Esophagus squamous epithelium (tissue), 5 donors: ENCODE measurements at regions of chr1 and their contacts with region 1.

Region 1: DNA sequence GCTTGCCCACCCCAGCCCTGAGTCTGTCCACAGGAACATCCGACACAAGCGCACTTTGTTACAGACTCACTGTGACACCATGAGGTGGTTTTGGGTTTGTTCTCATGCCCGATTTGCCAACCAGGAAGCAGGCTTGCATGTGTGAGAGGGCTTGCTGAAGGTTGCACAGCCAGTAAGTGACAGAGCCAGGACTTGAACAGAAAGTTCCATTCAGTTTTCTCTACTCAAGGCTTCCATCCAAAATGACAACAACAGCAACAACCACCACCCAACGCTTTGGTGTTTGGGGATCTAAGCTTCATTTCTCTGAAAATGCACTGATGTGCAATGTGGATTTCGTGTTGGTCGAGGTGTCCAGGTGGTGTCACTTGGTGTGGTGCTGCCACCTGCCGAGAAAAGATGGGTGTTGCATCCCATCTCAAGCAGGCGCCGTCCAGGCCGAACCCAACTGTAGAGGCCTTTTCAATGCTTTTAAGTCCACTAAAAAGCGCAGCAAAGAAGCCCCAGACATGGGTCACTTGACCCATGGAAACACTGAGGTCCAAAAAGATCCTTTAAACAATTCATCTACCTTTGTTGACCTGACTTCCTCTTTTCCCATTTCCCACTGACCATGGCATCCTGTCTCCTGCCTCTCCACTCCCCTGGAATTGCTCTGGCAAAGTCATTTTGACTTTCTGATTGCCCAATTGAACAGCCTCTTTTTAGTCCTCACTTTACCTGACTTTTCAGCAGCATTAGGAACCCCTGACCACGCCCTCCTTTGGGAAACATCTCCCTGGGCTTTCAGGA is 12.2 kb downstream of the CITED4 start:
- DNase-seq: no peak
- H3K4me3 ChIP-seq: no peak overlapping the region
- H3K27ac ChIP-seq: no peak overlapping the region
- H3K4me1 ChIP-seq: peaks cover 0 to 20% (median 10%) of the 10 kb centered on the region in 3 donors
- H3K27me3 ChIP-seq: no peaks in the 10 kb centered on the region
- CTCF ChIP-seq: peak; percentile 84 to 95 (median 88)
- POLR2A ChIP-seq: no peak

Region 2: DNA sequence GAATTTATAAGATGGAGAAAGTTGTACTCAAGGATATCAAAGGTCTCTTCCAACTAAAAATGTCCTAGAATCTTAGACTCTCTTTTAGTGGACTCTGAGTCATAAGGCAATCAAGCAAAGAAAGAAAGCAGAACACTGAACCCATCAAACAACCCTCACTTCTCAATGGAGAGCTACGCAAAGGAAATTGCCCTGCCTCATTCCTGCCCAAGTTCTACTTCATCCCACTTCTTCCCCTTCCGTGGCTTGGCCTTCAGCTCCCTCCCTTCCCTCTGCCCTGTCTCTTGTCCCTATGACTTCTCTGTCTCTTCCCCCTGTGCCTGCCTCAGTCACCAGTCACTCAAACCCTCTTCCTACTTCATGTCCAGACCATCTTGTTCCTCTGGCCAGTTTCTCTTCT is 243.0 kb before region 1 on chr1:
- intact Hi-C with region 1: loop called (anchors 10 kb)
- DNase-seq: no peak
- H3K4me3 ChIP-seq: no peak overlapping the region
- H3K27ac ChIP-seq: no peak overlapping the region
- H3K4me1 ChIP-seq: no peaks in the 10 kb centered on the region
- H3K27me3 ChIP-seq: peaks cover 0 to 4% (median 0%) of the 10 kb centered on the region in 4 donors
- CTCF ChIP-seq: no peak
- POLR2A ChIP-seq: no peak

Region 3: DNA sequence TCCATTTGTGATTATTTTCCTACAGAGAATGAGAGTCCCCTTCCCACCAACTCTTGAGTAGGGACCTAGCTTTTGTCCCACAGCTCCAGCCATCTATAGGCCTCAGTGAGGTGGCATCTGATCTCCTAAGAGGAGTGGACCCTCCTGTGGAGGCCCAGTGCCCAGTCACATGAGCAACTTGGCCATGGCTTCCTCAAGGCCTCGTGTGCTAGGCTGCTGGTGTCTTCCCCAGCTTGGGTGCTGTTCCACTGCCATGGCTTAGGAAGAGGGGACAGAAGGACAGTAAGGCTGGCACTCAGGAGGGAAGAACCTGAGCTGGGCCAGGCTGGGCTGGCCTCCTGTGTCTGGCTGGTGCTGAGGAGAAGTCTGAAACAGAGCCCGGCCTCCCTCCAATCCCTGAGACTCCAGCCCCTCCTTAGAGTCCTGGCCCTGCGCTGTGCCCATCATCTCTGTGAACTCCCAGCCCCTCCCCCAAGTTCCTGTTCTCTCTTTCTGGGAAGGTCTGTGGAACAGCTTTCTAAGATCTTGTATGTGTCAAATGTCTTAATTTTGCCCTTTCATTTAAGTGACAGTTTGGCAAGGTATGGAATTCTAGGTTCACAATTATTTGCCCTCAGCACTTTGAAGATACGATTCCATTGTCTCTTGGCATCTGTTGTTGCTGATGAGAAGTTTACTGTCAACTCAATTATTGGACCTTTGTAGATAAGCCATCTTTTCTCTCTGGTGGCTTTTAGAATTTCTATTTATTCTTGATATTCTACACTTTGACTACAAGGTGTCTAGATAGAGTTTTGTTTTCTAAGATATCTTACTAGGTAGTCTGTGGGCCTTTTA is 73.5 kb before region 1 on chr1:
- intact Hi-C with region 1: loop called (anchors 5 kb)
- DNase-seq: no peak
- H3K4me3 ChIP-seq: no peak overlapping the region
- H3K27ac ChIP-seq: no peak overlapping the region
- H3K4me1 ChIP-seq: peaks cover 0 to 12% (median 0%) of the 10 kb centered on the region in 3 donors
- H3K27me3 ChIP-seq: no peaks in the 10 kb centered on the region
- CTCF ChIP-seq: no peak
- POLR2A ChIP-seq: no peak

Region 4: DNA sequence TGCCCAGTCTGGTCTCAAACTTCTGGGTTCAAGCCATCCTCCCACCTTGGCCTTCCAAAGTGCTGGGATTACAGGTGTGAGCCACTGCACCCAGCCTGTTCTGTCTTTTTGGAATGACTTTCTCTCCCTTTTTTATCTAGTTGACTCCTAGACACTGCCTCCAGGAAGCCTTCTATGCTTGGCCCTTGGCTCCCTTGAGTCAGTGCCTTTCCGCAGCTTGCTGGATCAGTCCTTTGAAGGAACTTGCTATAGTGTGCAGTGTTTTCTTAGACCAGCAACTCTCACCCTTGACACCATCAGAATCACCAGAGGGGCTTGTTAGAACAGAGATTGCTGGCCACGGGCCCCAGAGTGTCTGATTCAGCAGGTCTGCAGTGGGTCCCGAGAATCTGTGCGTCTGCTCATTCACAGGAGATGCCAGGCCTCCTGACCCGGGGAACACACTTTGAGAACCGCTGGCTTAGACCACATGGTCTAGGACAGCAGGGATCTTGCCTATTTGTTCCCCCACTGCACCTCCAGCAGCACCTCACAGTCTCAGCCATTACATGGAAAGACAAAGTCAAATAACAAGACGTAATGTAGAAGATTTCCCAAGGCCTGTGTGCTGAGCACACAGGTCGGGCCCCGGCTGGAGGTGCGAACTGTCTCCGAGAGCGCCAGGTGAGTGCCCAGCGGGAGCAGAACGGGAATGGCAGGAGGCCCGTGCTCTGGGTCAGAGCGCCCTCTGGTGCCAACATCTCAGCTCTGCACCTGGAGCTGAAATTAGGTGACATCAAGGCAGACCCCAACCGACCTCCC is 102.1 kb after region 1 on chr1:
- intact Hi-C with region 1: loop called (anchors 2 kb)
- DNase-seq: no peak
- H3K4me3 ChIP-seq: no peak overlapping the region
- H3K27ac ChIP-seq: no peak overlapping the region
- H3K4me1 ChIP-seq: peaks cover 0 to 21% (median 3%) of the 10 kb centered on the region in 3 donors
- H3K27me3 ChIP-seq: peaks cover 0 to 17% (median 0%) of the 10 kb centered on the region in 4 donors
- CTCF ChIP-seq: peak; percentile 56 to 96 (median 91)
- POLR2A ChIP-seq: no peak